HCT116 (cell line): ENCODE measurements at regions of chr5 and their contacts with region 1.

Region 1: GRCh38 chr5:37722236-37723146 is 117.3 kb downstream of the GDNF start:
- DNase-seq: peak; percentile 40
- ATAC-seq: peak; percentile 86
- H3K4me3 ChIP-seq: no peak overlapping the region
- H3K27ac ChIP-seq: no peak overlapping the region
- H3K4me1 ChIP-seq: peaks cover 7 to 22% of the 10 kb centered on the region in 2 experiments
- H3K27me3 ChIP-seq: no peaks in the 10 kb centered on the region
- CTCF ChIP-seq: no peak
- POLR2A ChIP-seq: no peak
- RAD21 ChIP-seq: no peak

Region 2: DNA sequence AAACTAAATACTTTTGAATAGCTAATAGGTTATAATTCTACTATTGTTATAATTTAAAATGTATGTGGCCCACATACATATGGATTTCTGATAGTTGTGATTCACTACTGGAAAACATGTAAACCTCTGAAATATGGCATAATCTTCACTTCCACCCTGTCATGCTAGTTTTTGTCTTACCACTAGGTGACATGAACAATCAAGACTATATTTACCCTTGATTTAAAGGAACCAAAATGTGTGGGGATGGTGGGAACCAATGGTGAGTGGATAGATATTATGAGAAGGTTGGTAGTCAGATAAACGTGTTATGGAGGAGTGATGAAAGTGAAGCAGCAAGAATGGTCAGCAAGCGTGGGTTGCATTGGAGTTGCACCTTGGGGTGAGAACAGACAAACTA is 856.3 kb before region 1 on chr5:
- CTCF ChIA-PET with region 1: no interaction called
- POLR2A ChIA-PET with region 1: no interaction called
- RAD21 ChIA-PET with region 1: no interaction called
- intact Hi-C with region 1: no loop called
- DNase-seq: no peak
- ATAC-seq: peak; percentile 67; the same call in 1 of the 2 replicates
- H3K4me3 ChIP-seq: no peak overlapping the region
- H3K27ac ChIP-seq: no peak overlapping the region
- H3K4me1 ChIP-seq: peaks cover 0 to 5% of the 10 kb centered on the region in 2 experiments; a peak in 1 of 4 replicates
- H3K27me3 ChIP-seq: no peaks in the 10 kb centered on the region
- CTCF ChIP-seq: peak in 1 of 3 experiments; percentile 41; a peak in 2 of 6 replicates
- POLR2A ChIP-seq: no peak
- RAD21 ChIP-seq: no peak

Region 3: DNA sequence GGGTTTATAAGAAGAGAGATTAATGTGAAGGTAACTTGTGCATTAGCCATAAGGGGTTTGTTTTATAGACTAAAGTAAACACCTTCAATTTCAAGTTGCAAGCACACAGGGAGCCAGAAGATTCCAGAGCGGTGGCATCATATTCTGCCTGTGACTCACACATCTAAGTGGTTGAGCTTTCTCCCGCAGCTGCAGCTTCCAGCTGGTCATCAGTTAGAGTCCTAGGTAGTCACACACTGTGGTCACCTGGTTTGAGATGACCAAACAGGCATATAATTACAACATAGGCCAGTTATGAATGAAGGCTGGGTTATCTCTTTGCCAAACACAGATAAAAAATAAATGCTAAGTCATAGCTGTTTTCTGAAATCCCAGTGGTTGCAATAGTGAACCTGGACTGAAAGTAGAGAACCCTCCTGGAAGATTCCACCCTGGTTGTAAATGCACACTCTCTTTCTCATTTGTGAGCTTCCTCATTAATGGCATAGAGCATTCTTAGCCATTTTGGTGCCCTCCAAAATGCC is 53.9 kb before region 1 on chr5:
- CTCF ChIA-PET with region 1: no interaction called
- POLR2A ChIA-PET with region 1: no interaction called
- RAD21 ChIA-PET with region 1: no interaction called
- intact Hi-C with region 1: no loop called
- DNase-seq: peak; percentile 86
- ATAC-seq: peak; percentile 91
- H3K4me3 ChIP-seq: no peak overlapping the region
- H3K27ac ChIP-seq: peak overlapping the region; percentile 12; the same call in 1 of the 2 replicates
- H3K4me1 ChIP-seq: peaks cover 40 to 44% of the 10 kb centered on the region in 2 experiments
- H3K27me3 ChIP-seq: no peaks in the 10 kb centered on the region
- CTCF ChIP-seq: no peak
- POLR2A ChIP-seq: no peak
- RAD21 ChIP-seq: no peak

Region 4: GRCh38 chr5:37738057-37738691 is 15.7 kb after region 1 on chr5:
- CTCF ChIA-PET with region 1: interaction called, 12 read pairs
- POLR2A ChIA-PET with region 1: no interaction called
- RAD21 ChIA-PET with region 1: no interaction called
- intact Hi-C with region 1: no loop called
- DNase-seq: peak; percentile 59
- ATAC-seq: peak; percentile 83
- H3K4me3 ChIP-seq: no peak overlapping the region
- H3K27ac ChIP-seq: peak overlapping the region; percentile 2; the same call in 1 of the 2 replicates
- H3K4me1 ChIP-seq: peaks cover 21% of the 10 kb centered on the region in 2 experiments
- H3K27me3 ChIP-seq: no peaks in the 10 kb centered on the region
- CTCF ChIP-seq: no peak
- POLR2A ChIP-seq: no peak
- RAD21 ChIP-seq: no peak

Region 5: GRCh38 chr5:37940931-37941623 is 218.6 kb after region 1 on chr5:
- CTCF ChIA-PET with region 1: no interaction called
- POLR2A ChIA-PET with region 1: no interaction called
- RAD21 ChIA-PET with region 1: no interaction called
- intact Hi-C with region 1: no loop called
- DNase-seq: no peak
- ATAC-seq: no peak
- H3K4me3 ChIP-seq: no peak overlapping the region
- H3K27ac ChIP-seq: no peak overlapping the region
- H3K4me1 ChIP-seq: no peaks in the 10 kb centered on the region
- H3K27me3 ChIP-seq: no peaks in the 10 kb centered on the region
- CTCF ChIP-seq: no peak
- POLR2A ChIP-seq: no peak
- RAD21 ChIP-seq: no peak